ENCODE measurements at regions of chr1 and their contacts with region 1.

Region 1: GRCh38 chr1:214439352-214440119 is 111.9 kb downstream of the PTPN14 start:
- DNase-seq: peak; percentile 42
- H3K4me3 Mint-ChIP-seq: peak overlapping the region; percentile 30
- H3K27ac Mint-ChIP-seq: peak overlapping the region; percentile 88
- H3K4me1 Mint-ChIP-seq: peaks cover 48% of the 10 kb centered on the region
- H3K27me3 Mint-ChIP-seq: peaks cover 4% of the 10 kb centered on the region

Region 2: DNA sequence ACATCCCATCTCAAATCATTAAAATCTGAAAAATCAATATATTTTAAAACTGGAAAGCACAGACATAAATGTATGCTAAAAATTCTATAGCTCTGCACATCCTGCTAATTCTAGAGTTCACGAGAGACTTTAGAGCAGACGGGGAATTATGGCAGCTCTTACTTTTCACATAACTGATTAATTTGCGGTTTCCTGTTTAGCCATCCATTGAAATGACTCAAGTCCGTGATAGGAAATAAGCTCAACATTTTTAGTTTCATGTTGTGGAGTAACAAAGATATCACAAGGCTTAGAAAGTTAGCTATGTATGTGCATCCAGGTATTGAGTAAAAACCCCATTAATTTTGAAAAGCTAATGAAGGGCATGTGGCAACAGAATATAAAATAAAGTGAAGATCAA is 35.4 kb before region 1 on chr1:
- CTCF ChIA-PET with region 1: no interaction called
- DNase-seq: no peak
- H3K4me3 Mint-ChIP-seq: no peak overlapping the region
- H3K27ac Mint-ChIP-seq: no peak overlapping the region
- H3K4me1 Mint-ChIP-seq: peaks cover 26% of the 10 kb centered on the region
- H3K27me3 Mint-ChIP-seq: no peaks in the 10 kb centered on the region

Region 3: GRCh38 chr1:214427871-214428277 is 11.7 kb before region 1 on chr1:
- CTCF ChIA-PET with region 1: interaction called, 10 read pairs
- DNase-seq: peak; percentile 86
- H3K4me3 Mint-ChIP-seq: peak overlapping the region; percentile 39
- H3K27ac Mint-ChIP-seq: peak overlapping the region; percentile 95
- H3K4me1 Mint-ChIP-seq: peaks cover 44% of the 10 kb centered on the region
- H3K27me3 Mint-ChIP-seq: peaks cover 4% of the 10 kb centered on the region

Measured in activated naive CD4-positive, alpha-beta T cell treated with anti-CD3 and anti-CD28 coated beads, Interleukin-2, amount 10 ng/mL, durations not matched to agents 7 days and 5 days (primary cell).